ENCODE measurements at regions of chr11 and their contacts with region 1.

Region 1: GRCh38 chr11:61477727-61478148 is 30.8 kb upstream of the LRRC10B start:
- DNase-seq: peak; percentile 78
- ATAC-seq: no peak

Region 2: DNA sequence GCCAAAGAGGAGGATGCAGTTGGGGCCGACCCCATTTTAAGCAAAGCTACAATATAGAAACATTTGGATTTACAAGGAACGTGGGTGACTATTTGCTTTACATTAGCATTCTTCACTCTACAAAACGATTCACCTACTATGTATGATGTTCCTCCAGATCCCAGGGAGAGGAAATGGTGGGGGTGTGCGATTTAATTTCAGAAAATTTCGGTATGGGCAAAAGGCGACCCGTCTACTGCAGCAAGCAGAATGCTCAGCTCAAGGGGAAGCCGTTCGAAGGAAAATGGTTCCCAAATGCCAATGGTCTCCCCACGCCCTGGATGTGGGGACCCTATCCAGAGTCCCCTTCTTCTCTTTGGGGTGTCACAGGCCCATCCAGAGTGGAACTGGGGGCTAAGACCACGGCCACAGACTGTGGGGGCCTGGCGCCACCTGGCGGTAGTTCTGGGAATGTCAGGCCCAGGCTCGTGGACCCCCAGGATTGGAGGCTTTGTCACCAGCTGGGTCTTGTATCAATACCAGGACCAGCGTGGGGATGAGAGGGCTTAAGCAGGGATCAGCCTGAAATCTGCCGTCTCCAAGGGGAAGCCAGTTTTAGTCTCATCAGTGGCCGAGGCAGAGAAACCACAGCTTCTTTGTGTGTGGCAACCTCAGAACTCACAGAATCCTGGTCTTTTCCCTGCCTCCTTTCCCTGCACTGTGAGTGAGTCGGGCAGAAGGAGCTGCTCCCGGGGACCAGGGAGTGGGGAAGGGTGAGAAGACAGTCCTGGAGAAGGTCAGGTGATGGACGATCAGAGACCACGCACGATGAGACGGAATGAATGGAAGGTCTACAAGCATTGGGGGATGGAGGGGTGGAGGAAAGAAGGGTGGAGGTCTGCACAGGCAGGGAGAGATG is 39.2 kb after region 1 on chr11:
- intact Hi-C with region 1: loop called (anchors 2 kb)
- DNase-seq: peak; percentile 73
- ATAC-seq: peak; percentile 48

Region 3: GRCh38 chr11:61567286-61568061 is 89.7 kb after region 1 on chr11:
- intact Hi-C with region 1: no loop called
- DNase-seq: peak; percentile 90
- ATAC-seq: peak; percentile 83

Region 4: DNA sequence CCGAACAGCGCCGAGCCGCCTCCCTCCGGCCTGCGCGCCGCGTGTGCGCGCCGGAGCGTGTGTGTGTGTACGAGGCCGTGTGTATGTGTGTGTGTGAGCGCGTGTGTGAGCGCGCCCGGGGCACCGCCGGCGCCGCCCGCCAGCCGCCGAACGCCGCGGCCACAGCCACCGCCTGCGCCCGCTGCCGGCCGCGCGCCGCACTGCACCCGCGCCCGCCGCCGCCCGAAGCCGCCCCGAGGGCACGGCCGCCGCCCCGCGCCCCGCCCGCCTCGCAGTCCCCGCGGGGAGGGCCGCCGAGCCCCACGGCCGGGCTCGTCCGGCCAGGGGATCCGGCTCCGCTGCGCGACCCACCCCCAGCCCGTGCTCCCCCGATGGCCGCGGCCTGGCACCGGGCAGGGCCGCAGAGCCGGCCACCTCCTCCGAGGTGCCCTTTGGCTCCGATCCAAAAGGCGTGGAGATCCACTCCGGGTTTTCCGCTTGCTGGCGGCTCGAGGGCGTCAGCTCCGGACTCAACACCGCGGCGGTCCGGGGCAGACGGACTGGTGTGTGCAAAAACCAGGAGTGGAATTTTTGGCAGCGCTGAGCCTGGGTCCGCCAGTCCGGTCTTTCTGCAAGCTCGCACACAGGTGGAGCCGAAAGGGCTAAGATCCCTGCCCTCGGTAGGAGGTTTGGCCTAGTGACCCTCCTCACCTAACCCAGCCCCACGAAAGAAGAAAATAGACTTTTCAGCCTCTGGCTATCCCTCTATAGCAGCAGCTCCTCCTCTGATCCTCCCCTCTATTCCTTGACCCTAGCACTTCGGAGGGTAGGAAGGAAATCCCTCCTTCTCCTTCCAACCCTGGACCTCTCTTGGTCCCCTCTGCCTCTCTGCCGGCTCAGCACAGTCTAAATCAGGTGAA is 103.5 kb after region 1 on chr11 and contains the start of gene SYT7:
- intact Hi-C with region 1: loop called (anchors 1 kb)
- DNase-seq: peak; percentile 95
- ATAC-seq: peak; percentile 86
- total RNA-seq, gene SYT7: 28.2 TPM

Region 5: GRCh38 chr11:61639816-61640443 is 162.2 kb after region 1 on chr11:
- intact Hi-C with region 1: loop called (anchors 2 kb)
- DNase-seq: no peak
- ATAC-seq: no peak

Measured in Right ventricle myocardium inferior (tissue), 1 donor.